Breast epithelium (tissue), 4 donors: ENCODE measurements at regions of chr11 and their contacts with region 1.

Region 1: DNA sequence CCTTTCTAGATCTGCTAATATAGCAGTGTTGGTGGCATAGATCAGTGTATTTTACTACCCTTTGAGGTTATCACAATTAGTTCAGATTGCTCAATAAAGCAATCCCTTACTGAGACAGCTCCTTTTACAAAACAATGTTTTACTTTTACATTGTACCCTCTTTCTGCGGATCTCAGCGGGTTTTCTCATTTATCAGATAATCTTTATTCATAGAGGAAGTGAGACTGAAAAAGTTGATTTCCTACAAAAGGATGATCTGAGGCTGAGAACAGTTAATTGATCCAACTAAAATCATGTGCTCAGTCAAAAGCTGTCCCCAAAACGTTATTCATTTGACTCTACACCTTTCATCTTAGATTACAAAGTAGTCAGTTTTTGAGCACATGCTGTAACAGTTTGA is 2319.9 kb downstream of the LRRC4C start:
- DNase-seq: no peak
- H3K4me3 ChIP-seq: no peak overlapping the region
- H3K27ac ChIP-seq: no peak overlapping the region
- H3K4me1 ChIP-seq: no peaks in the 10 kb centered on the region
- H3K27me3 ChIP-seq: no peaks in the 10 kb centered on the region
- CTCF ChIP-seq: no peak
- POLR2A ChIP-seq: no peak

Region 2: GRCh38 chr11:40867991-40868632 is 1728.5 kb after region 1 on chr11:
- intact Hi-C with region 1: loop called (anchors 5 kb)
- DNase-seq: no peak
- H3K4me3 ChIP-seq: no peak overlapping the region
- H3K27ac ChIP-seq: peak overlapping the region in 1 of 2 donors; percentile 7
- H3K4me1 ChIP-seq: no peaks in the 10 kb centered on the region
- H3K27me3 ChIP-seq: no peaks in the 10 kb centered on the region
- CTCF ChIP-seq: no peak
- POLR2A ChIP-seq: no peak